ENCODE measurements at regions of chr17 and their contacts with region 1.

Region 1: DNA sequence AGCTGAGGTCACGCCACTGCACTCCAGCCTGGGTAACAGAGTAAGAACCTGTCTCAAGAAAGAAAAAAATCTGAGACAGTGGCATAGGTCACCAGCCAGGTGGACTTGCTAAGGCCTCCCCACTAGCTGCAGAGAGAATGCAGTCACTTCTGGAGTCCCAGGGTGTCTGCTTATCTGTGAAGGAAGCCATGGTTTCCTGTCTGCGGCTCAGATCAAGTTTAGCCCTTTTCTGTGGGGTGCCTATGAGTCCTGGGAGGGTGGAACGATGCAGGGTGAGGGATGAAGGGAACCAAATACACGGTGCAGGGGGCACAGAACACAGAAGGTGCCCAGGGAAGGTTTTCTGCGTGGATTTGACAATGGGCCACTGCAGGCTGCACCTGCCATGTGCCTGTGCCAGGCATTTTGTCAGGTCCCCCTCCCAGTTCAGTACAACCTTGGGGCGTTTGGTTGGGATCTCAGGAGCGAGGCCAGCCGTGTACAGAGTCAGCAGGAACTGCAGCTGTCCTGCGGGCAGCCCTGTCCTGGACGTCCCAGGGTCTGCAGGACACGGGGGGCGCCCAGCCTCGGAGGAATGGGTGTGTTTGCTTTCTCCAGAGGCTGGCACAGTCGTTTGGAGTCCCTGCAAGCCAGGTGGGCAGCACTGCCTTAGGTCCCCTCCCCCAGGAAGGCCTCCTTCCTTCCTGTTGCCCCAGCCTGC is 41.8 kb downstream of the RAB11FIP4 start:
- DNase-seq: peak; percentile 79

Region 2: DNA sequence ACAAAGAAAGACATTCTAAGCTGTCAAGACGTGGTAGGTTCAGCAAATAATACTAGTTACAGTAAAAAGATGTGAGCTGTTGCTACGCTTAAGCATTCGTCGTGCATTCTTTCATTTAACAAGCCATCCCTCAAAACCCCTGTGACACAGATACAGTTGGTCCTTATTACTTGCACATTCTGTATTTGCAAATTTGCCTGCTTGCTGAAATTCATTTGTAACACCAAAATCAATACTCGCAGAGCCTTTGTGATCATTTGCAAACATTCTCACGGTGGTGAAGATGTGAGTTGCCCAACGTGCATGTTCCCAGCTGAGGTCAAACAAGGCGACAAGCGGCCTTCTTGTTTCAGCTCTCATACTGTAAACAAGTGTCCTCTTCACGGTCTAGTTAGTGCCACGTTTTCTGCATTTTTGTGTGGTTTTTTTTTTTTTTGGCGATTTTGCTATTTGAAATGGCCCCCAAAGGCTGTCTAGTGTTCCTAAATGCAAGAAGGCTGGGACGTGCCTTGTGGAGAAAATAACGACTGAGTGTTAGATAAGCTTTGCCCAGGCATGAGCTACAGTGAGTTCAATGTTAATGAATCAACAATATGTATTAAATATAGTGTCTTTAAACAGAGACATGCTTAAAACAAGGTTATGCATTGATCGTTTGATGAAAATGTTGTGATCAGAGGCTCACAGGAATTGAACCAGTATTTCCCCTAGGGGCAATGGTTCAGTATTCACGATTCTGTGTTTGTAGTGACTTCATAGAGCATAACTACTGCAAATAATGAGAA is 42.3 kb after region 1 on chr17:
- in situ Hi-C with region 1: no loop called
- DNase-seq: no peak

Region 3: DNA sequence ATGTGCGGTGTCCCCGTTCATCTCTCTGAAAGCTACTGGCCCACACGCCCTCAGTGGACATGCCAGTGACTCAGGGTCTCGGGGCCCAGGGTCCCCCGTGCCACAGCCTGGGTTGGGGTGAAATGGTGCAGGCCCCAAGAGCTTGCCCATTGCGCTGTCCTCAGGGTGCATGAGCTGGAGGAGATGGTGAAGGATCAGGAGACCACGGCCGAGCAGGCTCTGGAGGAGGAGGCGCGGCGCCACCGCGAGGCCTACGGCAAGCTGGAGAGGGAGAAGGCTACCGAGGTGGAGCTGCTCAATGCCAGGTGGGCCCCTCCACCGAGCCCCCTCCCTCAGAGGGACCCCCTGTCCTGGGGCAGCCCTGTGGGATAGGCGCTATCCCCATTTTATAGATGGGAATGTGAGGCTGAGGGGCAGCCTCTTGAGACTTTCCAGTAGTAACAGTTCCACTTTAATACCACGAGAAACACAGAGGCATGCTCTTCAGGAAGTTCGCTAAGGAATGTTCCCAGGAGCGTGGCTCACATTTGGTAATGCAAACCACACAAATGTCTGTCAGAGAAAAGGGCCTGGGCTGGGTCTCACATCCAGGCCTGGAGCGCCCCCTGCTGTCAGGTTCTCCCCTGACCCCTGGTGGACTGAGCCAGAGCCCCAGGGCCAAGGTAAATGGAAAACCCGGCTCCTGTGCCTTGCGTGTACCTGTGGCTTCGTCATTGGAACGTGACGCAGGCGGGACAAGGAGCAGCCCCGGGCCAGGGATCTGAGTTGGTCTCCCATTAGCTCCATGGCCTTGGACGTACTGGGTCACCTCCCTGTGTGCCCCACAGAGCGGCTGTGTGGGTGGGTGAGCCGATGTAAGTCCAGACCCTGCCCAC is 91.9 kb after region 1 on chr17:
- in situ Hi-C with region 1: loop called (anchors 10 kb)
- DNase-seq: peak; percentile 84

Measured in KBM-7 (cell line).